B cell (primary cell): ENCODE measurements at regions of chr2 and their contacts with region 1.

Region 1: DNA sequence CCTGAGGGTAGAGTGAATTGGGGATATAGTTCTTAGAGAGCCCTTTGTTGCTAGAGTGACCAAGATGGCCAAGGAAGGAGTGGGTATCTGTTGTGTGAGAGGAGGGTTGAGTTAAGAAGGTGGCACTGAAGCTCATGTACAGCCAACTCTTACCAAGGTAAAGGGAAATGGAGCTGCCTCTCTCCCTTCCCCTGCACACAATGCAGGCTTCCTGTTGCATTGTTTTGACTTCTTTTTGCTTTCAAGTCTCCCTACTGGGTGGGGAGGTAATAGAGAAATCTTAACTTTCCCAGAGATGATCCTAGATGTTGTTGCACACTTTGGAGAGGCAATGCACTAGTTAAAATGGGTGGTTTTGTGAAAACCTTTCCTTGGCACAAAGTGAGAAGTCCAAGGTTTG is 23.8 kb downstream of the HOXD1 start:
- DNase-seq: no peak
- ATAC-seq: no peak
- H3K4me3 ChIP-seq: no peak overlapping the region
- H3K4me3 Mint-ChIP-seq: no peak overlapping the region
- H3K27ac ChIP-seq: no peak overlapping the region
- H3K27ac Mint-ChIP-seq: no peak overlapping the region
- H3K4me1 ChIP-seq: no peaks in the 10 kb centered on the region
- H3K4me1 Mint-ChIP-seq: no peaks in the 10 kb centered on the region
- H3K27me3 ChIP-seq: peaks cover 0 to 6% (median 0%) of the 10 kb centered on the region in 4 experiments
- H3K27me3 Mint-ChIP-seq: peaks cover 26% of the 10 kb centered on the region
- CTCF ChIP-seq: no peak

Region 2: DNA sequence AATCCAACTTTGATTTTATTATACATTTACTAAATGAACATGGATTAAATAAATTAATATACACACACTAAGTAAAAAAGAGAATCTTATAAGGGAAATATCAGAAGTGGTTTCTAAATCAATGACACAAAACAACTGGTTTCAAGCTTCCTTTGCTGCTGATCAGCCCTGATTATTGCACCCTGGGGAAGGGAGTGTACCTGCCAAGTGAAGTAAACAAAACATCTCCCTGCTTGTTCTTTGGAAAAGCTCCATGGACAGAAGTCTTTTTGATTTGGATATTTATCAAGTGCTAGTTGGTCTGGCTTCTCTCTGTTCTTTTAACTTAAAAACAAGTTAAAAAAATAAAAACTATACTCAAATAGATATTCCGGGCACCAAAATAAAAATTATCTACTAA is 1670.2 kb after region 1 on chr2:
- CTCF ChIA-PET with region 1: no interaction called
- POLR2A ChIA-PET with region 1: no interaction called
- intact Hi-C with region 1: no loop called
- DNase-seq: no peak
- ATAC-seq: no peak
- H3K4me3 ChIP-seq: no peak overlapping the region
- H3K4me3 Mint-ChIP-seq: no peak overlapping the region
- H3K27ac ChIP-seq: no peak overlapping the region
- H3K27ac Mint-ChIP-seq: no peak overlapping the region
- H3K4me1 ChIP-seq: no peaks in the 10 kb centered on the region
- H3K4me1 Mint-ChIP-seq: no peaks in the 10 kb centered on the region
- H3K27me3 ChIP-seq: no peaks in the 10 kb centered on the region
- H3K27me3 Mint-ChIP-seq: no peaks in the 10 kb centered on the region
- CTCF ChIP-seq: no peak

Region 3: DNA sequence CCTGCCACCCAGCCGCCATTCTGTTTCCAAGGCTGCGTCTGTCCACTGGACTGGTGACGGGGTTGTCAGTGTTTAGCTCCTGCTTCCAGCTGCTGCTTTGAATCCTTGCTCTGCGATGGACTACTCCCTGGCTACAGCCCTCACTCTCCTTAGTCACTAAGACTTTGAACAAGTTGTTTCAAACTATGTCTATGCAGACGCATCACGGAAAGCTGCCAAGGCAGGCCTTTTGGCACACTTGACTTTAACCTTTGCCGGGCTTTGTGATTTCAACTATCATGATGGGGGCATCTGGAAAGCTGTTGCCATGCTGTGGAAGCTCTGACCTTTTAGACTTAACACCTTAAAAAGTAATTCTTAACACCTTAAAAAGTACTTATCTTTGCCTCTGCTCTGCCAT is 1805.9 kb after region 1 on chr2:
- CTCF ChIA-PET with region 1: no interaction called
- POLR2A ChIA-PET with region 1: no interaction called
- intact Hi-C with region 1: loop called (anchors 10 kb)
- DNase-seq: no peak
- ATAC-seq: no peak
- H3K4me3 ChIP-seq: no peak overlapping the region
- H3K4me3 Mint-ChIP-seq: no peak overlapping the region
- H3K27ac ChIP-seq: no peak overlapping the region
- H3K27ac Mint-ChIP-seq: no peak overlapping the region
- H3K4me1 ChIP-seq: no peaks in the 10 kb centered on the region
- H3K4me1 Mint-ChIP-seq: no peaks in the 10 kb centered on the region
- H3K27me3 ChIP-seq: peaks cover 0 to under 1% (median 0%) of the 10 kb centered on the region in 4 experiments
- H3K27me3 Mint-ChIP-seq: no peaks in the 10 kb centered on the region
- CTCF ChIP-seq: no peak